ENCODE measurements at regions of chr12 and their contacts with region 1.

Region 1: GRCh38 chr12:122190842-122191668 is 8.1 kb downstream of the LRRC43 start:
- DNase-seq: peak in 1 of 2 donors; percentile 81
- ATAC-seq: peak; percentile 80

Region 2: DNA sequence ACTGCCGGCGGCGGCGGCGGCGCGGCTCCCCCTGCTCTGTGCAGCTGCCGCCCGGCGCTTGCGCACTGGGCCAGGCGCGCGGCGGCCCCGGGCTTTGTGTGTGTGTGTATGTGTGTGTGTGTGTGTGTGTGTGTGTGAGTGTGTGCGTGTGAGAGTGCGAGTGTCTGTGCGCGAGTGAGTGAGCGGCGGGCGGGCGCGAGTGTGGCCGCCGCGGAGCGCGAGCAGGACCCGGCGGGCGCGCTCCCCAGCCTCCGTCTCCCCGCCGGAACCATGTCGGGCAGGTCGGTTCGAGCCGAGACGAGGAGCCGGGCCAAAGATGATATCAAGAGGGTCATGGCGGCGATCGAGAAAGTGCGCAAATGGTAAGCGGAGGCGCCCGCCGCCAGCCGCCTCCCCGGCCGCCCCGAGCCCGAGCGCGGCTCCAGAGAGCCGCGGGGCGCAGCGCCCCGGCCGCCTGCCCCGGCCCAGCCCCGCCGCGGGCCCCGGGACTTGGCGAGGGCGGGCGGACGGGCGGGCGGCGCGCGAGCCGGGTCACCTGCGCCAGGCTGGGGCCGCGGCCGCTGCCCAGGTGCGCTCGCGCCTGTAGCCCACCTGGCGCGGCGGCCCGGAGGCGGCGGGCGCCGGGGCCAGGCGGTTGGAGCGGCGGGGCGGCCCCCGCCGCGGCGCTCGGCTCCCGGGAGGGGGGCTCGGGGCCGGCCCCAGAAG is 169.1 kb before region 1 on chr12 and contains the start of gene BCL7A:
- intact Hi-C with region 1: no loop called
- DNase-seq: peak; percentile 65 to 70
- ATAC-seq: peak; percentile 86
- total RNA-seq, gene BCL7A: 6.5 to 6.7 TPM

Region 3: GRCh38 chr12:122137681-122138080 is 53.4 kb before region 1 on chr12:
- intact Hi-C with region 1: loop called in 1 of 2 experiments (anchors 10 kb)
- DNase-seq: peak in 1 of 2 donors; percentile 58
- ATAC-seq: peak; percentile 74